ENCODE measurements at regions of chr9 and their contacts with region 1.

Region 1: DNA sequence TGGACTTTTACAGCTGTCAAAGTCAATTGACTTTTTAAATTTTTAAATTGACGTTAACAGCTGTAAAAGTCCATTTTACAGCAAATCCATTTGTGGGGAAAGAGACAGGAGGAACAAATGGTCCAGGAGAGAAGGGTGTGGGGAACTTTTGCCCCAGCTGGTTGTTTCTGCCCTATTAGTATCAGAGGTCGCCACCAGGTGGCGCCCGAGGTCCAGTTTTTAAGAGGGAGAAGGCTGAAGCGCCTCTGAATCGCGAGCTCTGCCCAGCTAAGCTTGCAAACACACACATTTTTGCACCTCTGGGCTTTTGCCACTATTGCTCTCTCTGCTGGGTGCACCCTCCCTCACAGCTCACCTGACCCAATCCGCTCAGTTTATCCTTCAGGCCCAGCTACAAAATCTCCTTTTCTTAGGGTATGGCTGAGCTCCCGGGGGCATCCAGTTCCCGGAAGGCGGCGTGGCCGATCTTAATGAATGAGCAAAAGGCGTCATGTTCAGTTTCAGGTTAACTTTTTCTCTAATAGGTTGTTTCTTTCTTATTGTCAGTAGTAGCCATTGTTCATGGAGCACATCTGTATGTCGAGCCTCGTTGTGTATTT is 6.3 kb upstream of the TTLL11 start:
- DNase-seq: peak; percentile 86
- ATAC-seq: peak; percentile 87
- H3K4me3 Mint-ChIP-seq: no peak overlapping the region
- H3K27ac Mint-ChIP-seq: no peak overlapping the region
- H3K4me1 Mint-ChIP-seq: peaks cover 13% of the 10 kb centered on the region
- H3K27me3 Mint-ChIP-seq: peaks cover 17% of the 10 kb centered on the region
- CTCF ChIP-seq: peak; percentile 94

Region 2: DNA sequence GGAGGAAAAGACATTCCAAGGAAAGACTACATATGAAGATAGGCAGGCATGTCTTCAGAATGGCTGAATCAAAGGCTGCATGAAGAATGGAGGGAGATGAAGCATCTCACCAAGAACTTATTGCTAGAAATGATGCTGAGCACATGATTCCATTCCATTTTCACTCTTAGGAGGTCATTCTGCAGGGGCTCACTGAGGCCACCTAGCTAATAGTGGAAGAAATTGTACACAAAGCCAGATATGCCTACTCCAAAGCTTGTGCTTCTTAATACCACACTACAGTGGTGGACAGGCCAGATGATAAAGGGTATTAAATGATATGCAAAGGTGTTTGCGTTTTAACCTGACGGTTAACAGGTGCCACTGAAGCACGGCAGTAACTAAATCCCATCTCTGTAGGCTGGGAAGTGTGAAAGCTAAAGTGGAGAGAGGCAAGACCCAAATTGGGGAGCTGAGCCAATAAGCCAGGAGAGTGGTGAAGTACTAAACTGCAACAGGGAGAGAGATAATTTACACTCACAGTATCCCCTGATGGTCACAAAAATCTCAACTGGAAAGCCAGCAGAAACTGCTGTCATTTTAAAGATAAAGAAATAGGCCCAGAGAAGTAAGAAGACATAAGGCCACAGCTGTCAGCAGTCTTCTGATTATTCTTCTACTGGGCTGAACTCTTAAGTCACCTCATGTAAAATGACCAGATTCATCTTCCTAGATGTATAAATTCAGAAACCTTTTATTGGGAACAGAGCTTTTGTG is 45.6 kb after region 1 on chr9:
- CTCF ChIA-PET with region 1: interaction called, 25 read pairs
- POLR2A ChIA-PET with region 1: no interaction called
- DNase-seq: no peak
- ATAC-seq: no peak; the same call in 1 of the 2 replicates
- H3K4me3 Mint-ChIP-seq: no peak overlapping the region
- H3K27ac Mint-ChIP-seq: no peak overlapping the region
- H3K4me1 Mint-ChIP-seq: no peaks in the 10 kb centered on the region
- H3K27me3 Mint-ChIP-seq: no peaks in the 10 kb centered on the region
- CTCF ChIP-seq: no peak

Region 3: DNA sequence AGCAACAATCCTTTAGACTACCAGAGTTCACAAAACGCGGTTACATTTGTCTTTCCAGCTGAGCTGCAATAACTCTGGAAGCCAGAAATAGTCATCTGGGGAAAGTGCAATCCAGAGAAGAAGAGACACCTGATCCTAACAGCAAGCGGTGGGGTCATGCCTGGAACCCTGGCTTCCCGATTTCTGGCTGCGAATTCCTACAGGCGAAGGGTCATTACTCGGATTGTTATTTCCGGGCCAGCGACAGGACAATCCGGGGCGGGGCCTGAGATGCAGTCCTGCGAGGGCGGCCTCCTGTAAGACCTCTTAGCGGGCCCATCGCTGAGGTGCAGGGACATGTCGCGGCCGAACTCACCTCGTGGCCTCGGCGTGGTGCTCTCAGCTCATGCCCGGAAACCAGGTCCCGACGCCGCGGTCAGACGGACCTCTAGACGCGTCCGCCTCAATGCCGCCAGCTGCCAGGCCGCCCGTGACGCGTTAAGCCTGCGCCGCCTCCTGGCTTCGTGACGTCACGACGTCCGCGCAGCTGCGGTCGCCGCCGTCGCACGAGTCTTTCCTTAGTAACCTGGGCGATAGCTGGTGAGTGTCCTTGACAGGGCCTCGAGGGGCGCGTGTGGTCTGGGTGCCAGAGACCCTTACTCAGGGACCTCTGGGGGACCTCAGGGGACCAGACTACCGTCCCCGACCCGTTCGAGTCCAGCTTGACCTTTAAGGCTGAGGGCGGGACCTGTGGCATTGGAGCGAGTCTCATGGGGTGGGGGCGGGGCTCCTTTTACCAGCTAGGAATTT is 165.2 kb after region 1 on chr9 and contains the starts of genes MRRF and RBM18:
- CTCF ChIA-PET with region 1: interaction called, 14 read pairs
- POLR2A ChIA-PET with region 1: no interaction called
- DNase-seq: peak; percentile 93
- ATAC-seq: peak; percentile 84
- H3K4me3 Mint-ChIP-seq: peak within 1 kb of the TSS; percentile 95
- H3K27ac Mint-ChIP-seq: peak within 1 kb of the TSS; percentile 99
- H3K4me1 Mint-ChIP-seq: peaks cover 20% of the 10 kb centered on the region
- H3K27me3 Mint-ChIP-seq: no peaks in the 10 kb centered on the region
- CTCF ChIP-seq: no peak
- total RNA-seq, gene MRRF: 36.1 to 42.3 TPM (median 38.8 TPM) in 3 replicates
- total RNA-seq, gene RBM18: 11.4 to 14.3 TPM (median 13.1 TPM) in 3 replicates

Region 4: DNA sequence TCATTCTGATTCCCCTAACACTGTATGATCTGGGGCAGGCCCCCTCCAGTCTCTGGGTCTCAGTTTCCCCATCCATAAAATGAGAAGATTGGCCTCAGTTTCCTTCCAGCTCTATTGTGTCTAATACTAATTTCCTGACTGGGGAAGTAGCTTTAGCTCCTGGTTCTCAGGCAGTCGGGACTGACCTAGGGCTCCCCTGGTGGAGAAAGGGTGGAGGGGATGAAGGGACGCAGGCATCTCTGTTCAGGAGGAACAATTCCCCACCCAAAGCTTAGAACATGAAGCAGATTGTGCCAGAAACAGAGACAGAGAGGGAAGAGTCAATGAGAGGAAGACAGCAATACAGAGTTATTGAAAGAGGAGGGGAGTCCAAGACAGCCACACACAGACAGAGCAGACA is 257.3 kb after region 1 on chr9:
- CTCF ChIA-PET with region 1: interaction called, 91 read pairs
- POLR2A ChIA-PET with region 1: no interaction called
- DNase-seq: peak; percentile 55
- ATAC-seq: peak; percentile 96
- H3K4me3 Mint-ChIP-seq: no peak overlapping the region
- H3K27ac Mint-ChIP-seq: no peak overlapping the region
- H3K4me1 Mint-ChIP-seq: peaks cover 4% of the 10 kb centered on the region; the same call in 1 of the 2 replicates
- H3K27me3 Mint-ChIP-seq: peaks cover 12% of the 10 kb centered on the region; the same call in 1 of the 2 replicates
- CTCF ChIP-seq: peak; percentile 30; the same call in 1 of the 2 replicates

Region 5: GRCh38 chr9:122453677-122454135 is 354.3 kb after region 1 on chr9:
- CTCF ChIA-PET with region 1: interaction called, 12 read pairs
- POLR2A ChIA-PET with region 1: no interaction called
- DNase-seq: no peak
- ATAC-seq: no peak
- H3K4me3 Mint-ChIP-seq: no peak overlapping the region
- H3K27ac Mint-ChIP-seq: no peak overlapping the region
- H3K4me1 Mint-ChIP-seq: no peaks in the 10 kb centered on the region
- H3K27me3 Mint-ChIP-seq: peaks cover 9% of the 10 kb centered on the region
- CTCF ChIP-seq: no peak; the same call in 1 of the 2 replicates

Measured in WTC11 (cell line).